Posterior vena cava (tissue), 2 donors: ENCODE measurements at regions of chr11 and their contacts with region 1.

Region 1: DNA sequence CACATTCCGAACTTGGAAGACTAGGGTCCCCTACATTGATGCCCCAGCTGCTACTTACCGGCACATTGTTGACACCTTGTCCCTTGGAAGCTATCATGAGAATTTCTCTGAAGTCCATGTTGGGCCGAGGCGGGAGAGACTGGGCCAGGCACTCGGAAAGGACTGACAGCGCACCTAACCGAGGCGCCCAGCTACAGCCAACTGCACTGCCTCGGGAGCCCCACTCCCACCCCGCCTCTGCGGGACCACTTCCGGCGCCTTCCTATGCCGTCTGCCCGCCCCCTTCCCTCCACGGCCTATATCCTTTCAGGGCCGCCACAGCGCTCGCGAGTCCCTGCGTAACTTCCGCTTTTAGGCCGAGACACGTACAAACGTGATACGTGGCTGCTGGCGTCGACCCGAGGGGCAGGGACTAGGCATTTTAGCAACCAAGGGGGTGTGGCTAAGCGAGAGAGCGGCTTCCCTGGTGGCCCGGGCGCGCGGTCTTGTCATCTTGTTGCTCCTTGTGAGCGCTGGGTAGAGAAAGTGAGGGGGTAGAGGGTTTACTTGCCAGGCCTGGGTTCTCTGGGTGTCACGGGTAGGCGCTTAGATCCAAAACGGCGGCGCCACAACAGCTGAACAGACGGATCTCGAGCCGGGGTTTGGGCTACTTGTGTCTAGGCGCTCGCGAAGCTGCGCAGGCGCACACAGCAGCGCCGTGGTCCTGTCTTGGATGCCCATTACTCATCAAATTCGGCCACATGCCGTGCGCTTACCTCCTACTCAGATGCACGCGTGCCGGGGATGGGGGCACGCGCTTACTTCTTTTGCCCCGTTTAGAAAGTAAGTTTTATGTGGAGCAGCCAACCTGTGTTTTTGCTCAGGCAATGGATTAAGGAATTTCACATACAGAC is at the start of gene SPTY2D1:
- DNase-seq: peak; percentile 100
- total RNA-seq, gene SPTY2D1: 12.1 to 20.2 TPM

Region 2: DNA sequence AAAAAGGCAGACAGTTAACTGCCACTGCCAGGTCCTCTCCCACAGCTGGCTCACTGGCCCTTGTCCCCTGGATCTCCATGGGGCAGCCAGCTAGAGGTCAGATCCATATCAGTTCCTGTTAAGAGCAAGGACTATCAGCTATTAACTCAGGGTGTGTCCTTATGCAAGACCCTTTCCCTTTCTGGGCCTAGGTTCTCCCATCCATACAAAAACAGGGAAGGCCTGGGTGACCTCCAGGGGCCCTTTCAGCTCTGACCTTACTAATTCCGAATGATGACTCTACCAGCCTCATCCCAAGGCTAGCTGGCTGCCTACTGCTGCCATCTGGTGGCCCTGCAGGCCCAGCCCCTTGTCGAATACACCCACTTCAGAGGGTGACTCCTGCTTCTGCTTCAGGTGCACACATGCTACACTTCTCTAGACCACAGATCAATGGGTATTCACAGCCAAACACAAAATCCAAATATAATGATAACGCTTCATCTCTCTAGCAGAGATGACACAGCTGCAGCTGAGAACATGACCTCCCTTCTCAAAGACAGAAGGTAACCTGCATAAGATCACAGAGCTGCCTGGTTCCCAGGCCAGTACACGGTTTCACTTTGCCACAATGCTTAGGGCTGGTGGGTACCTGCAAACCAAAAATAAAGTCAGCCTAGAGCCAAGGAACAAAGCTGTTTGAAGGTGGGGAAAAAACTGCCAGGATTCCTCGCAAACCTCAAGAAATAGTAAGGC is 655.7 kb before region 1 on chr11:
- intact Hi-C with region 1: no loop called
- DNase-seq: no peak

Region 3: GRCh38 chr11:18590571-18590970 is 43.8 kb before region 1 on chr11:
- intact Hi-C with region 1: loop called in 1 of 2 experiments (anchors 2 kb)
- DNase-seq: no peak

Region 4: DNA sequence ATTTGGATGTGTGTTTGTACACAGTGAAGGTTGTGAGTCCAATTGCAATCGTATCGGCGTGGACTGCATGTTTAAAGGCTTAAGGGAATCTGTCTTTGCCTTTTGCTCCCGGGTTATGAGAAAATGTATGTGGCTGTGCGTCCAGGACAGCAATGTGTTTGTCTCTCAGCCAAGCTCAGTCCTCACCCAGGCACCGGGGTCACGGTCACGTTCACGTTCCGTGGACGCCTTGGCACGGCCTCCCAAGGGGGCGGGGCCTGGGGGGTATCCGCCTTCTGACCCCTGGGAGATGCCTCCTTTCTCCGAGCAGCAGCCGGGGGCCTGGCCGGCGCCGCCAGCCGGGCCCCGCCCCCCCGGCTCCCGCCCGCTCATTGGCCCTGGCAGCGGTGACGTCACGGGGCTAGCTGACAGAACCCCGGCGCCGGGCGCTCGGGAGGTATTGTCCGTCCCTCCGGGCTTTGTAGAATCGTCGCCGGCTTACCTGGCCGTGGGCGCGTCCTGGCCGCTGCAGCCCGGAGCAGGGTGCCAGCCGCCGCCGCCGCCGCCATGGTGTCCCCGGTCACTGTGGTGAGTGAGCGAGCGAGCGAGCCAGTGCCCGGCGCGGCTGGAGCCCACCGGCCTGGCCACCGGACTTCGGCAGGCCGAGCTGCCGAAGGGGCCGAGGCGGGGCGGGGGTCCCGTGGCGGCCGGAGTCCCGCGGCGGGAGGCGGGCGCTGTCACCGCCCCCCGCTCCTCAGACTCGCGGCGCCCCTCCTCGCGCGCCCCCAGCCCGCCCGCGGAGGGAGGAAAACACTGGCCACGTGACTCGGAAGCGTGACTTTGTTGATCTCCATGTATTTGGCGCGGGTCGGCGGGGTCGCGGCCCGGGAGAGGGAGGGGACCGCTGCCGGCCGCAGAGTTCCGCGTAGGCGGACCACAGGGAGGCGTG is 64.2 kb after region 1 on chr11 and contains the start of gene TMEM86A:
- intact Hi-C with region 1: loop called in 1 of 2 experiments (anchors 5 kb)
- DNase-seq: peak; percentile 97
- total RNA-seq, gene TMEM86A: 2.2 to 4.0 TPM

Region 5: GRCh38 chr11:18720808-18721560 is 86.6 kb after region 1 on chr11:
- intact Hi-C with region 1: no loop called
- DNase-seq: peak; percentile 90